CD4-positive, alpha-beta T cell (primary cell): ENCODE measurements at regions of chr20 and their contacts with region 1.

Region 1: DNA sequence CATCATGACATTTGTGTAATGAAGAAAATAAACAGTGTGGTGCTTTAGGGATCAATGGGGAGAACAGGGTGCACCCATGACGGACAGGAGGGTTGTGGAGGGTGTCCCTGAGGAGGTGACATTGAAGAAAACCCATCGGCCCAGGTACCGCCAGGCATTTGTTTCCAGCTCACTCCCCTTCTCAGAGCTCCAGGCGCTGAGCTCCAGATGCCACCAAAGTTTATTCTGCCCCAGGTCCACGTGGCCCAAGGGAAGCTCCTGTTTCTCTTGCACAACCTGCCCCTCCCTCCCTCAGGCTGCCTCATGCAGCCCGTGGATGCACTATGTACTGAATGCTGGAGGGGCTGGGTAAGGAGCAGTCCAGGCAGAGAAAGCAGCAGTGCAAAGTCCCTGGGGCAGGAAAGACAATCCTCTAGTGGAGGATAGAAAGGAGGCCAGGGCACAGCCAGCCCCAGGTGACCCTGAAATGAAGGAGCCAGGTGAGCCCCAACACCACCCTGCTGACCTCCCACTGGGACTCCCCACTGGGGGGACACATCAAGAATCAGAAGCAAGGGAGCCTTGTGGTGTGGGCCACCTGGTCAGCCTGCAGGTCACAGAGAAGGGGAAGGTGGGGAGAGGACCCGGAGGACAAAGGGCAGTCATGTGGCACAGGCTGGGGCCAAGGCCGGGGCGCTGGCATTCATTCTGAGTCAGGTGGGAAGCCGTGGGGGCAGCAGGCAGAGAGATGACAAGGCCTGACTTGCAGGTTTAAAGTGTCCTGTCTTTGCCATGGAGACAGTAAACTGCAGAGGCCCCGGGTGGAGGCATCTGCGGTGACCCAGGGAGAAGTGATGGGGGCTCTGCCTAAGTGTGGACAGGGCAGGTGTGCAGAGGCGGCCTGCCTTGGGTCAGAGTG is 230.1 kb downstream of the PREX1 start:
- DNase-seq: no peak
- ATAC-seq: no peak
- H3K4me3 ChIP-seq: no peak overlapping the region
- H3K4me3 Mint-ChIP-seq: no peak overlapping the region
- H3K27ac ChIP-seq: no peak overlapping the region
- H3K27ac Mint-ChIP-seq: no peak overlapping the region
- H3K4me1 ChIP-seq: no peaks in the 10 kb centered on the region
- H3K4me1 Mint-ChIP-seq: no peaks in the 10 kb centered on the region
- H3K27me3 ChIP-seq: no peaks in the 10 kb centered on the region
- H3K27me3 Mint-ChIP-seq: peaks cover 15% of the 10 kb centered on the region
- CTCF ChIP-seq: no peak

Region 2: DNA sequence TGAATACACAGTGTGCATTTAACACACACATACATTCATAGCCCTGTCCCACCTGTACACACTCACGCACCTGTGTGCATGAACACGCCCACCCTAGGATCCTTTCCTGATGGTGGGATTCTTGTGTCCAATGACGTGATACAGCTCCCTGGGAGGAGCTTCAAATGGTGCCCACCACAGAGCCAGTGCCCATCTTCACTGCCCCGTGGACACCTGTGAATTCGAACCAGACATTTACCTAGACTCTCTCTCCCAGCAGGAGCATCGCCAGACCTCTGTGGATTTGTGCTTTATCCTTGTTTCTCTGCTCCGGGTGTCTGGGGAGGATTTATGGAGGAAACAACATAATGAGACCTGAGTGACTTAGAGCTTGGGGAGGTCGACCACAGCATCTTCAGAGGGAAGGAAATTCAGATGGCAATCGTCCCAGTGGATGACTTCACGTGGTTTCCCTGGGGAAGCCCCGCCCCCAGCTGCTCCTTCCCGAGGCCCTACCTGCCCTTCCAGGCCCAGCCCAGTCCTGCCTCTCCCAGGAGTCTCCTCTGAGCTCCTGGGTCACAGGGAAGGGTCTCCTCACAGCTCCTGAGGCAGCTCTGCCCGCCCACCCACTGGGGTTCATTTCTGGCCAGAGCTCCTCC is 382.2 kb before region 1 on chr20:
- CTCF ChIA-PET with region 1: no interaction called
- POLR2A ChIA-PET with region 1: no interaction called
- intact Hi-C with region 1: loop called in 1 of 2 experiments (anchors 5 kb)
- DNase-seq: no peak
- ATAC-seq: no peak
- H3K4me3 ChIP-seq: no peak overlapping the region
- H3K4me3 Mint-ChIP-seq: no peak overlapping the region
- H3K27ac ChIP-seq: no peak overlapping the region
- H3K27ac Mint-ChIP-seq: no peak overlapping the region
- H3K4me1 ChIP-seq: no peaks in the 10 kb centered on the region
- H3K4me1 Mint-ChIP-seq: no peaks in the 10 kb centered on the region
- H3K27me3 ChIP-seq: no peaks in the 10 kb centered on the region
- H3K27me3 Mint-ChIP-seq: peaks cover 11% of the 10 kb centered on the region
- CTCF ChIP-seq: no peak